Mammary epithelial cell (primary cell): ENCODE measurements at regions of chr16 and their contacts with region 1.

Region 1: GRCh38 chr16:12455287-12455798 is 348.3 kb downstream of the CPPED1 start:
- DNase-seq: peak; percentile 35
- H3K4me3 ChIP-seq: no peak overlapping the region
- H3K27ac ChIP-seq: no peak overlapping the region
- H3K4me1 ChIP-seq: no peaks in the 10 kb centered on the region
- H3K27me3 ChIP-seq: no peaks in the 10 kb centered on the region
- CTCF ChIP-seq: peak; percentile 73 to 85

Region 2: DNA sequence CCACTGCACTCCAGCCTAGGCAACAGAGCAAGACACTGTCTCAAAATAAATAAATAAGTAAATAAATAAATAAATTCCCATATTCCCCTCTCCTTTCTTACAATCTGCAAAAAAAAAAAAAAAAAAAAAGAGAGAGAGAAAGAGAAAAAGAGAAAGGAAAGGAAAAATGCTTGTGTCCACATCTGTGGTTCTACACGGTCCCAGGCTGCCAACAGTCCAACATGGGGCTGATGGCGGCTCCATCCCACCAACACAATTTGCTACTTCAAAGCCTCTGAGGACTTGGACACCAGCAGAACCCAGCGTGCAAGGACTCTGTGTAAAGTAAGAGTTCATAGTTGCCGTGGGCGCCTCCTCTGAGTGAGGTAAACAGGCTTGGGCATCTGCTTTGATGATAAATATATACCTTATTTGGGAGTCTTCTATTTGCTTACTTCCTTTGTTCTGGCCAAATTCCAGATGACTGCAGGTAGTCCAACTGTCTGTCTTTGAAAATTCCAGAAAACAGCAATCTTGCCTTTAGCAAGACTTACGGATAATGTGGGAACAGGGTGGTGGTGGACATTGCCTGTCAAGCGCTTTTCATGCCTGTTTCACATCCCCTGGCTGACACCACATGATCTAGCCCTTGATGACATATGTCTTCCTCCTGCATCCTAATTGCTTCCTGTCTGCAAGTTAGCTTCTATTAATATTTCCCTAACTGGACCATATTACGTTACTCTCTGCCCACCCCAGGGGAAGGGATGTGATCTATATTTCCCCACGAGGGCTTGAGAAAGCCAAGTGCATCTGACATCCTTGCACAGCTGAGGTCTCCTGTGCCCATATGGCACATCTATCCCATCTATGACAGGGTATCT is 878.7 kb before region 1 on chr16:
- CTCF ChIA-PET with region 1: no interaction called
- dilution Hi-C with region 1: no loop called
- in situ Hi-C with region 1: no loop called
- intact Hi-C with region 1: no loop called
- DNase-seq: no peak
- H3K4me3 ChIP-seq: no peak overlapping the region
- H3K27ac ChIP-seq: no peak overlapping the region
- H3K4me1 ChIP-seq: no peaks in the 10 kb centered on the region
- H3K27me3 ChIP-seq: no peaks in the 10 kb centered on the region
- CTCF ChIP-seq: no peak

Region 3: GRCh38 chr16:12375046-12375740 is 80.2 kb before region 1 on chr16:
- CTCF ChIA-PET with region 1: no interaction called
- dilution Hi-C with region 1: loop called (anchors 5 kb)
- in situ Hi-C with region 1: no loop called
- intact Hi-C with region 1: no loop called
- DNase-seq: no peak
- H3K4me3 ChIP-seq: no peak overlapping the region
- H3K27ac ChIP-seq: no peak overlapping the region
- H3K4me1 ChIP-seq: no peaks in the 10 kb centered on the region
- H3K27me3 ChIP-seq: no peaks in the 10 kb centered on the region
- CTCF ChIP-seq: no peak

Region 4: DNA sequence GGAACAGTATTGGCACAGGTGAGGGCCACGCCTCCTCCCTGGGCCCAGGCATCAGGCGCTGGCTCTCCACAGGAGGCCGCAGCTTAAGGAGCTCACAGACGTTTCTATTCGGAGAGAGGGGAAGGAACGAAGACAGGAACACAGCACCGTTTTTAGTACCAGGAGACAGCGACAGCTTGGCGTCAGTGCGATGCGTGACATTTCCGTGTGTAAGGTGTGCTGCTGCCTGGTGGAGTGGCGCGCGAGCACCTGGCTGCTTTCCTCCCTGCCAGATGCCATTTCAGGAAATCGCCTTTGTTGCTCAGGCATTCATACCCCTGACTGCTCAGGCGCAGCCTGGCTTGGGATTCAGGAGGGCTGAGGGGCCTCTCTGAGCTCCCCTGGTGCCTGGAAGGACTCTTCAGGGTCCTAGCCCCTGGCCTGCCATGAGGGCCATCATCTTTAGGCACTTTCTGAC is 19.1 kb before region 1 on chr16:
- CTCF ChIA-PET with region 1: no interaction called
- dilution Hi-C with region 1: no loop called
- in situ Hi-C with region 1: no loop called
- intact Hi-C with region 1: no loop called
- DNase-seq: no peak
- H3K4me3 ChIP-seq: no peak overlapping the region
- H3K27ac ChIP-seq: no peak overlapping the region
- H3K4me1 ChIP-seq: no peaks in the 10 kb centered on the region
- H3K27me3 ChIP-seq: no peaks in the 10 kb centered on the region
- CTCF ChIP-seq: no peak

Region 5: DNA sequence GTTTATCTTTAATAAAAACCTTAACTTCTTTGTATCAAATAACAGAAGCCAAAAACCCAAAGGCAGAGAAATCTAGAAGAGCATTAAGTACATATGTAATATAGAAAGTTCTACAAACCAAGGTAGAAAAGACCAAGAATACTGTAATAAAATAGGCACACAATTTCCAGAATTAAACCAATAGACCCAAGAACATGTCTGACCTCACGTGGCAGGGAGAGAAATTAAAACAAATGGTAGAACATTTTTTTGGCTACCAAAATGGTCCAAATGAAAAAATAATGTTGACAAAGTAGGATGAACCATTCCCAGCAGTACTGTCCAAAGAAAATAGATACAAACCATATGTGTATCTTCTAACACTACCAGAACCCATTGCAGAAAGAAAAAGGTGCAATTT is 164.8 kb after region 1 on chr16:
- CTCF ChIA-PET with region 1: no interaction called
- dilution Hi-C with region 1: no loop called
- in situ Hi-C with region 1: no loop called
- intact Hi-C with region 1: loop called (anchors 5 kb)
- DNase-seq: no peak
- H3K4me3 ChIP-seq: no peak overlapping the region
- H3K27ac ChIP-seq: no peak overlapping the region
- H3K4me1 ChIP-seq: no peaks in the 10 kb centered on the region
- H3K27me3 ChIP-seq: no peaks in the 10 kb centered on the region
- CTCF ChIP-seq: no peak

Region 6: DNA sequence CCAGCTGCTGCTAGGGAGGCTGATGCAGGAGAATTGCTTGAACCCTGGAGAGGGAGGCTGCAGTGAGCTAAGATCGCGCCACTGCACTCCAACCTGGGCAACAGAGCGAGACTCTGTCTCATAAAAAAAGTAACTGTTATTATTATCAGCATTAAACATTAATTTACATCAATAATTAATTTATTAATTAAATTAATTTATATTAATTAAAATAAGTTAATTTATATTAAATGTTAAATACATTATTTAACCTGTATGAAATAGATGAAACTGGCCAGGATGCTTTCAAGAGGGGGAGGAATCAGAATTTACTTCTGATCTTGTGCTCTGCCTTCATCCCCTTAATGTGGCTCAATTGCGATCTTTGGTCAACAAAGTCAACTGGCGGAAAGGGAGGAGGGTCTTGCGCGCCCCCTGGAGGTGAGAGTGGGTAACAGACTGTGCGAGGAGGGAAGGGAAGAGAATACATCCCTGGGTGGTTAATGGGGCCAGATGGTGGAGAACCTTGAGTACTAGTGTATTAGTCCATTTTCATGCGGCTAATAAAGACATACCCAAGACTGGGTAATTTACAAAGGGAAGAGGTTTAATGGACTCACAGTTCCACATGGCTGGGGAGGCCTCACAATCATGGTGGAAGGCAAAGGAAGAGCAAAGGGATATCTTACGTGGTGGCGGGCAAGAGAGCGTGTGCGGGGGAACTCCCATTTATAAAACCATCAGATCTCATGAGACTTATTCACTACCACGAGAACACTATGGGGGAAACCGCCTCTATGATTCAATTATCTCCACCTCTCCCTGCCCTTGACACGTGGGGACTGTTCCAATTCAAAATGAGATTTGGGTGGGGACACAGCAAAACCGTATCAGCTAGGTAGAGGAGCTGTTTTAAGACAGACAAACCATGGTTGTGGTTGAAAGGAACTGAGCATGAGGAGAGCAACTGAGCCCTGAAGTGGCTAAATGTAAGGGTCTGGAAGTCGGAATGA is 364.1 kb after region 1 on chr16:
- CTCF ChIA-PET with region 1: no interaction called
- dilution Hi-C with region 1: no loop called
- in situ Hi-C with region 1: loop called in 1 of 2 experiments (anchors 25 kb)
- intact Hi-C with region 1: loop called (anchors 1 kb)
- DNase-seq: peak; percentile 43
- H3K4me3 ChIP-seq: no peak overlapping the region
- H3K27ac ChIP-seq: no peak overlapping the region
- H3K4me1 ChIP-seq: no peaks in the 10 kb centered on the region
- H3K27me3 ChIP-seq: no peaks in the 10 kb centered on the region
- CTCF ChIP-seq: peak; percentile 89 to 90

Region 7: DNA sequence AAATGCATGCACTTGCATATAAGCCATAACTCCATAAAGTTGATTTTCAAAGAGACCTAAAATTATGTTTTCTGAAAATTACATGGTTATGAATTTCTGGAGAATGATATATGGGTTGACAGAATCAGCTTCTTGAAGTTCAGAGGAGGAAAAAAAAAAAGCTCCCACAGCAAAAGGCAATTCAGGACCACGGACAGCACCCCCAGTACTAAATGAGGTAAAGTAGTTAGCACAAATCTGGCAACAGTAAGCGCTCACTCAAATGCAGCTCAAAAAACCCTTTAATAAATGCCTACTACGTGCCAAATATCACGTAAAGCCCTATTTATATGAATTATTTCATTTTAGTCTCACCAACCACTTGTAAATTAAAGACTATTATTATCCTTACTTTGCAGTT is 581.3 kb after region 1 on chr16:
- CTCF ChIA-PET with region 1: no interaction called
- dilution Hi-C with region 1: no loop called
- in situ Hi-C with region 1: no loop called
- intact Hi-C with region 1: loop called (anchors 10 kb)
- DNase-seq: peak; percentile 41
- H3K4me3 ChIP-seq: no peak overlapping the region
- H3K27ac ChIP-seq: no peak overlapping the region
- H3K4me1 ChIP-seq: no peaks in the 10 kb centered on the region
- H3K27me3 ChIP-seq: no peaks in the 10 kb centered on the region
- CTCF ChIP-seq: no peak